ENCODE measurements at regions of chr17 and their contacts with region 1.

Region 1: GRCh38 chr17:76278952-76279741 is 14.0 kb downstream of the UBALD2 start:
- DNase-seq: peak; percentile 89
- ATAC-seq: peak; percentile 88
- H3K4me3 Mint-ChIP-seq: no peak overlapping the region
- H3K27ac Mint-ChIP-seq: no peak overlapping the region
- H3K4me1 Mint-ChIP-seq: peaks cover 4% of the 10 kb centered on the region
- H3K27me3 Mint-ChIP-seq: no peaks in the 10 kb centered on the region

Region 2: GRCh38 chr17:76027159-76027839 is 251.8 kb before region 1 on chr17 and contains the start of gene EVPL:
- CTCF ChIA-PET with region 1: interaction called, 11 read pairs
- DNase-seq: no peak
- ATAC-seq: no peak
- H3K4me3 Mint-ChIP-seq: no peak within 1 kb of the TSS
- H3K27ac Mint-ChIP-seq: no peak within 1 kb of the TSS
- H3K4me1 Mint-ChIP-seq: peaks cover 12% of the 10 kb centered on the region
- H3K27me3 Mint-ChIP-seq: no peaks in the 10 kb centered on the region
- total RNA-seq, gene EVPL: 0.03 TPM in 1 of 2 experiments, not detected in the other

Region 3: GRCh38 chr17:76132574-76133338 is 146.4 kb before region 1 on chr17:
- CTCF ChIA-PET with region 1: interaction called, 308 read pairs
- DNase-seq: no peak
- ATAC-seq: no peak
- H3K4me3 Mint-ChIP-seq: no peak overlapping the region
- H3K27ac Mint-ChIP-seq: no peak overlapping the region
- H3K4me1 Mint-ChIP-seq: peaks cover 16% of the 10 kb centered on the region
- H3K27me3 Mint-ChIP-seq: no peaks in the 10 kb centered on the region

Region 4: DNA sequence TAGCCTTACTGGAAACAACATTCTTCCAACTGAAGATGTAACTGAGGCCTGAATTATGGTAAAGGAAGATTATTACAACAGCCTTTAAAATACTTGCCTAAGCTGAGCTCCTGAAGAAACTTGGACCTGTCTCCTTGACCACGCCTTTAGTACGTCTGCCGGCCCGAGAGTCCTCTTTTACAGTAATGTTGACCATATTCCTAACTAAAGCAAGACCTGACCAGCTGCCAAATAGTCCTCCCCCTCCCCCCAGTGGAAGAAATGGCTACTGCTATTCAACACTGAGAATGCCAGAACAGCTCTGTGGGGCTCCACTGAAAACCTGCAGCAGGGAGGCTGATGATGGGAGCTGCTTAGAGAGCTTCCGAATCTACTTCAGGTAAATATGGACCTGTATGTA is 125.5 kb before region 1 on chr17:
- CTCF ChIA-PET with region 1: interaction called, 13 read pairs
- DNase-seq: no peak
- ATAC-seq: peak; percentile 20
- H3K4me3 Mint-ChIP-seq: no peak overlapping the region
- H3K27ac Mint-ChIP-seq: no peak overlapping the region
- H3K4me1 Mint-ChIP-seq: peaks cover 13% of the 10 kb centered on the region
- H3K27me3 Mint-ChIP-seq: no peaks in the 10 kb centered on the region

Region 5: DNA sequence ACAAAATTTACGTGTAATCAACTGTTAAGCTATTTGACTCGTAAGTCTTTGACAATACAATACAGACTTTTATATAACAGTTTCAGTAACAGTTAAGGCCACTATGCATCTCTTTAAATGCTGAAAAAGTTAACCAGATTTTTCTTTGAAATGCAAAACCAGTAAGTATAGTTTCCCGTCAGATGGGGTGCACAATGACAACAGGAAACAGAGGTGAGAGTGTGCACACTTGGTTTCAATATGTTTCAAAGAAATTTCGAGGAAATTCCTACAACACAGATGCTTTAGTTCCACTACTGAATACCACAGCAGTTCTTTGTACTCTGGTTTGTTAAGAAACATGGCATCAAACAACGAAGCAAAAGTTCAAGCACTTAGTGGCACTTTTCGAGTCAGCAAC is 87.3 kb before region 1 on chr17:
- CTCF ChIA-PET with region 1: interaction called, 17 read pairs
- DNase-seq: peak; percentile 76
- ATAC-seq: peak; percentile 87
- H3K4me3 Mint-ChIP-seq: peak overlapping the region; percentile 56
- H3K27ac Mint-ChIP-seq: peak overlapping the region; percentile 96
- H3K4me1 Mint-ChIP-seq: peaks cover 77% of the 10 kb centered on the region
- H3K27me3 Mint-ChIP-seq: no peaks in the 10 kb centered on the region

Region 6: GRCh38 chr17:76264755-76265596 is 14.2 kb before region 1 on chr17 and contains the start of gene UBALD2:
- CTCF ChIA-PET with region 1: interaction called, 50 read pairs
- DNase-seq: peak; percentile 100
- ATAC-seq: peak; percentile 82
- H3K4me3 Mint-ChIP-seq: peak within 1 kb of the TSS; percentile 92
- H3K27ac Mint-ChIP-seq: peak within 1 kb of the TSS; percentile 99
- H3K4me1 Mint-ChIP-seq: peaks cover 54% of the 10 kb centered on the region
- H3K27me3 Mint-ChIP-seq: no peaks in the 10 kb centered on the region
- total RNA-seq, gene UBALD2: 260 to 406 TPM